ENCODE measurements at regions of chr20 and their contacts with region 1.

Region 1: DNA sequence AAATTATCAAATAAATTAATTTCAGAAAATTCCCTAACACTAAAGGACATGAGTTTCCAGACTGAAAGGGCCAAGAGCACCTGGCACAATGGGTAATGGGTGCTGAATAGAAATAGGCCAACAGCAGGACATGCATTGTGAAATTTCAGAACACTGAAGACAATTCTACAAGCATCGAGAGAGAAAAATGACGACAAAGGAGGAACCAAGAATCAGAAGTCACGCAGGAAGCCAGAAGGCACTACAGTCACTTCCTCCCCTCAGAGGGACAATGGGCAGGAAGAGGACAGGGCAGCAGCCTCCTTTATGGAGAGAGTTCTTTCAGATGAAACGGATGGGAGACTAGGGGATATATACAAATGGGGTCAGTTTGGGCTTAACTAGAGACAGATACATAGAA is 29.6 kb downstream of the PCNA start:
- DNase-seq: no peak
- H3K4me3 ChIP-seq: no peak overlapping the region
- H3K27ac ChIP-seq: no peak overlapping the region
- H3K4me1 ChIP-seq: no peaks in the 10 kb centered on the region
- H3K27me3 ChIP-seq: no peaks in the 10 kb centered on the region
- CTCF ChIP-seq: no peak

Region 2: GRCh38 chr20:4406627-4407026 is 683.6 kb before region 1 on chr20:
- CTCF ChIA-PET with region 1: interaction called, 11 read pairs
- POLR2A ChIA-PET with region 1: no interaction called
- intact Hi-C with region 1: no loop called
- DNase-seq: no peak
- H3K4me3 ChIP-seq: no peak overlapping the region
- H3K27ac ChIP-seq: no peak overlapping the region
- H3K4me1 ChIP-seq: no peaks in the 10 kb centered on the region
- H3K27me3 ChIP-seq: peaks cover 13% of the 10 kb centered on the region; the same call in 1 of the 2 replicates
- CTCF ChIP-seq: no peak

Region 3: DNA sequence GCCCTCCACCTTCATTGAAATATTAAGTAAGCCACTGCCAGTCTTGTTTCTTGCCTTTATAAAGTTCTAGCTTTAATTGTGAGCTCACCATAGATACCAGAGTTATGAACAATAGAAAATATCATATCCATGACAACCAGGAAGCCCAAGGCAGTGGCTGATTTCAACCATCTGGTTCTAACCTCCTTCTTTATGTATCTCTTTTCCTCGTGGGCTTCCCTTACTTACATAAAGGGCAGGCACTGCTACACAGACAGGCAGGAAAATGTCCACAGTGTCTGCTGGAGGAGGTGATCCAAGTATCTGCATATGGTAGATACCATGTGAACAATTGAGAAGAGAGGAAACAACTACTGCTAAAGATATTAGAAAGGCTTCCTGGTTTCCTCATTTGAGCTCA is 433.7 kb before region 1 on chr20:
- CTCF ChIA-PET with region 1: no interaction called
- POLR2A ChIA-PET with region 1: no interaction called
- intact Hi-C with region 1: no loop called
- DNase-seq: no peak
- H3K4me3 ChIP-seq: no peak overlapping the region
- H3K27ac ChIP-seq: no peak overlapping the region
- H3K4me1 ChIP-seq: no peaks in the 10 kb centered on the region
- H3K27me3 ChIP-seq: no peaks in the 10 kb centered on the region
- CTCF ChIP-seq: no peak

Region 4: GRCh38 chr20:4829514-4830215 is 260.5 kb before region 1 on chr20:
- CTCF ChIA-PET with region 1: no interaction called
- POLR2A ChIA-PET with region 1: interaction called, 25 read pairs
- intact Hi-C with region 1: no loop called
- DNase-seq: no peak
- H3K4me3 ChIP-seq: no peak overlapping the region
- H3K27ac ChIP-seq: no peak overlapping the region
- H3K4me1 ChIP-seq: no peaks in the 10 kb centered on the region
- H3K27me3 ChIP-seq: no peaks in the 10 kb centered on the region
- CTCF ChIP-seq: no peak

Region 5: DNA sequence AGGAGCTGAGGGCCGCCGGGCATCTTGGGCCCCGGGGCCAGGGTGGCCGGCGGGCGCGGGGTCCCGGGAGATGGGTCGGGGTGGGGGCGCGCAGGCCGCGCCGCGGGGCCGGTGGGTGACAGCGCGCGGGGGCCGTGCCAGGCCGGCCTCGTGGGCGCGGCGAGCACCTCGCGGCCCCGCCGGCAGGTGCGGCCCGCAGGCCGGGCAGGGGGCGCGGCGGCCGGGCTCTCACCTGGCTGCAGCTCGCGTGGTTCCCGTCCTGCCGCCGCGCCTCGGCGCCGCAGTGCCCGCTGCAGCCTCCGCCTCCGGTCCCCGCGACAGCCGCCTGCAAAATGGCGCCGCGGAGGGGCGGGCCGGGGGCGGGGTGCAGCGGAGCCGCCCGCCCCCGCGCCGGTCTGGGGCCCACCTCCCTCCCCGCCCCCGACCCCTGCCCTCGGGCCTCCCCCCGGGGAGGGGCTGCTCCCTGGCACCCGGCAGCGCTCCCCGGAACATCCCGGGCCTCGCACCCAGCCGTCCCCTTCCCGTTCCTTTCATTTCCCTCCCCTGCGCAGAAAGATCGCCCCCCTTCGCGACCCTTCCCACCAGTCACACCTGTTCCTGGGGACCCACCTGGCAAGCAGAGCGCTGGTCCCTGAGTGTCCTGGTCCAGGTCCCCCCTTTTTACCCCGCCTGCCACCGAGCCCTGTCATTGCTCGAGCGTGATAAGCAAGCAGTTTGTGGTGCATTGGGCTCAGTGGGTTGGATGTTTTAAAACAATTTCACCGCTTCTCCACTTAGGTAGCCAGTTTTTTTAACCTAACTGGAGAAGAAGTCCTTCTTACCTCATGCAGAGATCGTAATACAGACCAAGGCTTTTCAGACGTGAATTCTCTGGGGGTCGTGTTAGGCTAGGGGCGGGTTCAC is 88.8 kb before region 1 on chr20 and contains the start of gene SLC23A2:
- CTCF ChIA-PET with region 1: interaction called, 16 read pairs
- POLR2A ChIA-PET with region 1: no interaction called
- intact Hi-C with region 1: no loop called
- DNase-seq: peak; percentile 45 to 60
- H3K4me3 ChIP-seq: peak within 1 kb of the TSS; percentile 93
- H3K27ac ChIP-seq: peak within 1 kb of the TSS; percentile 45
- H3K4me1 ChIP-seq: peaks cover 19% of the 10 kb centered on the region
- H3K27me3 ChIP-seq: no peaks in the 10 kb centered on the region
- CTCF ChIP-seq: no peak
- total RNA-seq, gene SLC23A2: 20.4 and 22.3 TPM in 2 replicates

Region 6: GRCh38 chr20:5058873-5059272 is 31.3 kb before region 1 on chr20:
- CTCF ChIA-PET with region 1: interaction called, 11 read pairs
- POLR2A ChIA-PET with region 1: no interaction called
- intact Hi-C with region 1: no loop called
- DNase-seq: no peak
- H3K4me3 ChIP-seq: no peak overlapping the region
- H3K27ac ChIP-seq: peak overlapping the region; percentile 75; the same call in 1 of the 2 replicates
- H3K4me1 ChIP-seq: peaks cover 26% of the 10 kb centered on the region
- H3K27me3 ChIP-seq: no peaks in the 10 kb centered on the region
- CTCF ChIP-seq: no peak

Region 7: DNA sequence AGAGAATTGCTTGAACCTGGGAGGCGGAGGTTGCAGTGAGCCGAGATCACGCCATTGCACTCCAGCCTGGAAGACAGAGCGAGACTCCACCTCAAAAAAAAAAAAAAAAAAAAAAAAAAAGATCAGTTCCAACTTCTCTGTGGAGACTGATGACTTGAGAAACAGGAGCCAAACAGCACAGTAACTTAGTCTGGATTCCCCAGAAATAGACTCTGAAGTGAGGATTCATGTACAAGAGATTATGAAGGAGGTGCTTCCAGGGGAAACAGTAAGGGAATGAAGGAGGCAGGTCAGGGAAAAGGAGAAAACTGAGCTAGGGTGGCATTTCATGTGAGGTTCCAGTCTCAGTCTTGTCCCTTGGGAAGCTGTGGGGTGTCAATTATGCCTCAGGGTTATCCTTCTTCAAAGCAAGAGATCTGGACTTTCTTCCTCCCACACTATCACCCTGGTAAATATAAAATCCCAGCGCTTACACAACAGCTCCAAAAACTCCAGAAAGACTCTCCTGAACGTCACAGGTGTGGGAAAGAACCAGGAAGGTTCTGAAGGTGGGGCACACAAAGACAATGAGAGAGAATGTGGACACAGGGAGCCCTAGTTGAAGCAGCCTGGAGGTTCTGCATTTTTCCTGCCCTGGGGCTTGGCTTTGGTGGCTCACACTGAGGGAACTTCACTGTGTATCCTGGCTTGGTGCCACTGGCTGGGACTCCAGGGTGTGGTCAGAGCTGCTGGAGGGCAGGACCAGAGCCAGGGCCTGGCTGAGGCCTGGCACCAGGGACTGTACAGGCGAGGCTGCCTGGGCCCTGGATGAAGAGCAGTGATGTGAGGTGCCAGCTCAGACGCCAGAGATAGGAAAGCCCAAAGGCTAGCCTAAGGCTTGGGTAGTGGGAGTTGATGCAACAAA is 17.2 kb before region 1 on chr20:
- CTCF ChIA-PET with region 1: no interaction called
- POLR2A ChIA-PET with region 1: no interaction called
- intact Hi-C with region 1: no loop called
- DNase-seq: peak; percentile 97 to 99
- H3K4me3 ChIP-seq: no peak overlapping the region
- H3K27ac ChIP-seq: peak overlapping the region; percentile 89
- H3K4me1 ChIP-seq: peaks cover 31% of the 10 kb centered on the region
- H3K27me3 ChIP-seq: no peaks in the 10 kb centered on the region
- CTCF ChIP-seq: no peak

Region 8: GRCh38 chr20:5222919-5223634 is 132.9 kb after region 1 on chr20:
- CTCF ChIA-PET with region 1: interaction called, 11 read pairs
- POLR2A ChIA-PET with region 1: no interaction called
- intact Hi-C with region 1: no loop called
- DNase-seq: peak; percentile 53 to 58
- H3K4me3 ChIP-seq: no peak overlapping the region
- H3K27ac ChIP-seq: no peak overlapping the region
- H3K4me1 ChIP-seq: no peaks in the 10 kb centered on the region
- H3K27me3 ChIP-seq: peaks cover 8% of the 10 kb centered on the region
- CTCF ChIP-seq: peak; percentile 86

Measured in PC-9 (cell line).